Activated naive CD4-positive, alpha-beta T cell treated with anti-CD3 and anti-CD28 coated beads for 36 hours (primary cell): ENCODE measurements at regions of chr6 and their contacts with region 1.

Region 1: DNA sequence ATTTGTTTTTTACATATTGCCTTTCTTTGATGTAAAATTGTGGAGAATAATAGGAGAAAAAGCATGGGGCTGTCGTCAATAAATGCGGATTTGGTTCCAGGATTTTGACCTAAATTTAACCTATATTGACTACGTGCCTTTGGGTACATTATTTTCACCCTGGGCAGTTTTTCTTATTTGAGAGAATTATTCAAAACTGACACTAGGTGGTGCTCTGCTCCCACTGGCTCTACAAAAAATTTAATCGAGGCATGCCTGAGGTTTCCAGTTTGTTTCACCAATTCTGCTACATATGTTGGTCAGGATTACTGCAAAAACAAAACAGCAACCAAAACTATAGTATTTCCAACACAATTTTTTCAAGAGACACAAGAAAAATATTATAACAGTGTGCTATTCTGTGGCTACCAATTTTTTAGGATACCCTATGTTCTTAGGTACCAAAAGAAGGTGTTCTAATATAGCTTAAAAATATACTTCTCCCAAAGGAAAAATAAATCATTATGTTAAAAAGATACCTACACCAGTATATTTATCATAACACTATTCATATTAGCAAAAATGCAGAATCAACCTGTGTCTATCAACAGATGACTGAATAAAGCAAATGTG is 48.6 kb upstream of the FABP7 start:
- DNase-seq: peak; percentile 31
- H3K4me3 Mint-ChIP-seq: no peak overlapping the region
- H3K27ac Mint-ChIP-seq: no peak overlapping the region
- H3K4me1 Mint-ChIP-seq: no peaks in the 10 kb centered on the region
- H3K27me3 Mint-ChIP-seq: peaks cover 19% of the 10 kb centered on the region

Region 2: DNA sequence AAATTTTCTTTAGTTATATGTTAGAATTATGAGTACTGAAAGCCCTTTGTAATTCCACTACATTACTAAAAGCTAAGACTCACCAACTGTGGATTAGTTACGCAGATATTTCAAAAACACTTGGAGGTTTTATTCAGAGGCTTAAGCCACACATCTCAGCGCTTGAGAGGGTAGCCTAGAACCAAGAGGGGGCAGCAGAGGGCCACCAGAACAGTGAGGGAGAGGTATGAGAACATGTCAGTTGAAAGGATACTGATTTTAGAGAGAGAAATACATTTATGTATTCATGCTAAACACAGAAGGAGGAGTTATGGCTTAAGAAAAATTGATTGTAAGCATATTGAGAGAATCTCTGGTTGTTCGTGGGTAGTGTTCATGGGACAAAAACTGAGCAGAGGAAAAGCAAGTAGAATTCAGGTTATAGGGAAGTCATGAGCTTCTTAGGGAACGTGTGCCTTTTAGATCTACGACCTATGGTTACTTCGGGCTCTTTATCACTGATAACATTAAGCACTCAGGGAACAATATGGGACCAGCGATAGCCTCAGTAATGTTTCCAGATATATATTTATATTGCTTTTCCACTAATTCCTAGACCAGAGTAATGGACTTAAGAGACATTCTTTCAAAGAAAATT is 238.8 kb before region 1 on chr6:
- CTCF ChIA-PET with region 1: interaction called, 6 read pairs
- intact Hi-C with region 1: loop called (anchors 1 kb)
- DNase-seq: peak; percentile 87
- H3K4me3 Mint-ChIP-seq: no peak overlapping the region
- H3K27ac Mint-ChIP-seq: no peak overlapping the region
- H3K4me1 Mint-ChIP-seq: peaks cover 10% of the 10 kb centered on the region
- H3K27me3 Mint-ChIP-seq: no peaks in the 10 kb centered on the region

Region 3: DNA sequence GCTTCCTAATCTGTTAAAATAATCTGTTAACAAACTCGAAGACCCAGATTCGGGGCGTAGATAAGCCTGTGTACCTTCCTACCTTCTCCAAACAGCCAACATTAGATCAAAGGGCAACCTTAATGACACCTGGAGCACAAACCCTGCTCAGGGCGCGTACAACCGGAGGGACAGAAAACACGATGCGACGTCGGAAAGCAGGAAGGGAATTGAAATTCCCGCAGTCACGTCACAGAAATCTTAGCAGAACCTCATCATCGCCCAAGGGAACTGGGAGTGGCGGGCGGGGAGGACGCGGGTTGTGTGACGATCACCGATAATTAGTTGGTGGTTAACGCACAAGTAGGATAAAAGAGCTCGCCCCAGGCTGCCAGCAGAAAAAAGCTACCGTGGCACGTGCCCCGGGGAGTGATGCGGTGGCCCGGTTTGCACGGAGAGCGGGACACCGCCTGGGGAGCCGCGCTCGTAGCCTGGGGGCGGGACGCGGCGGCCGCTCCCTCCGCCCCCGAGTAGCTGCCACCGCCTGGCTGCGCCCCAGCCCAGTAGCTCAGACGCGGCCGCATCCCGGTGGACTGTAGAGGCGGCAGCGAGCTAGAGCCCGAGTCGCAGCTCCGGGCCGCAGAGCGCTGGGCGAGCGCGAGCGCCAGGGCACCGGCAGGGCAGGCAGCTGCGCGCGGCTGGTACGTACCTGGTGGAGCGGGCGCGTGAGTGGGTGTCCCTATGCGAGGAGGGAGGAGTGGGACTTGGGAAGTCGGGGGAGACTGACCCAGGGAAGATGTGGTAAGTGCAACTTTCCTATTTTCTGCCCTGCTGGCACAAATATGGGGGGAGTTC is 120.8 kb before region 1 on chr6 and contains the start of gene PKIB:
- CTCF ChIA-PET with region 1: no interaction called
- intact Hi-C with region 1: loop called (anchors 2 kb)
- DNase-seq: peak; percentile 67
- H3K4me3 Mint-ChIP-seq: peak within 1 kb of the TSS; percentile 77
- H3K27ac Mint-ChIP-seq: no peak within 1 kb of the TSS
- H3K4me1 Mint-ChIP-seq: peaks cover 14% of the 10 kb centered on the region
- H3K27me3 Mint-ChIP-seq: peaks cover 30% of the 10 kb centered on the region
- total RNA-seq, gene PKIB: 0.67 TPM in 1 of 2 experiments, not detected in the other

Region 4: DNA sequence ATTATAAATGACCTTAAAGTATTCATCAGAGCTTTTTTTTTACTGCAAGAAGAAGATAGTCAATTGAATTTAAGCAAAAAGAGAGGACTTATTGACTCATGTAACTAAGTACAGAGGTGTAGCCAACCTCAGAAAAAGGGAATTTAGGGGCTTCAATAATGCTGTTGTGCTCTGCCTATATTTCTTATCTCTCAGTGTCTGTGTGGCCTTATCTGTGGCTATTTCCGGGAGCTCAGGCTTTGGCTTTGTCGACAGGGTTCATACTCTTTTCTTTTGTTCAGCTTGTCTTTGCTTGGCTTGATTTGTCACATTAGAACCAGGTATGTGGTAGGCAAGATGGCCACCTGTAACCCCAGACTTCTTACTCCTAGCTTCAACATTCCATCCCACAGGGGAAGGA is 10.1 kb after region 1 on chr6:
- CTCF ChIA-PET with region 1: interaction called, 10 read pairs
- intact Hi-C with region 1: no loop called
- DNase-seq: no peak
- H3K4me3 Mint-ChIP-seq: no peak overlapping the region
- H3K27ac Mint-ChIP-seq: no peak overlapping the region
- H3K4me1 Mint-ChIP-seq: no peaks in the 10 kb centered on the region
- H3K27me3 Mint-ChIP-seq: no peaks in the 10 kb centered on the region

Region 5: DNA sequence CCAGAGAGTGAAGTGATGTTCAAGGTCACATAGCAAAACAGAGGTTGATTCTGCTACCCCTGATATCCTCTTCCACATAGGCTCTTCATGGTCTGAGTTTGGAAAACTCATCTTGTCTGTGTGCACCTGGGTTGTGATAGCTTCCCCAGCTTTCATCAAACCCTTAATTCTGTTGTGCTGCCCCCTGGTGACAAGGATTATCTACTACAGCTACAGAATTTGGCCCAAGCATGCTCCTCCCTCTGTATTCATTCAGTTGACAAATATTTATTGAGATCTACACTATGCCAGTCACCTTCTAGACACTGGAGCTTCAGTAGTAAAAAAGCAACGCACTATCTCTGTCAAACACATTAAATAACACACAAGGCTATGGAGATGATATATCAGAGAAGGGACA is 108.6 kb after region 1 on chr6:
- CTCF ChIA-PET with region 1: interaction called, 83 read pairs
- intact Hi-C with region 1: loop called (anchors 1 kb)
- DNase-seq: peak; percentile 72
- H3K4me3 Mint-ChIP-seq: no peak overlapping the region
- H3K27ac Mint-ChIP-seq: no peak overlapping the region
- H3K4me1 Mint-ChIP-seq: no peaks in the 10 kb centered on the region
- H3K27me3 Mint-ChIP-seq: peaks cover 10% of the 10 kb centered on the region

Region 6: DNA sequence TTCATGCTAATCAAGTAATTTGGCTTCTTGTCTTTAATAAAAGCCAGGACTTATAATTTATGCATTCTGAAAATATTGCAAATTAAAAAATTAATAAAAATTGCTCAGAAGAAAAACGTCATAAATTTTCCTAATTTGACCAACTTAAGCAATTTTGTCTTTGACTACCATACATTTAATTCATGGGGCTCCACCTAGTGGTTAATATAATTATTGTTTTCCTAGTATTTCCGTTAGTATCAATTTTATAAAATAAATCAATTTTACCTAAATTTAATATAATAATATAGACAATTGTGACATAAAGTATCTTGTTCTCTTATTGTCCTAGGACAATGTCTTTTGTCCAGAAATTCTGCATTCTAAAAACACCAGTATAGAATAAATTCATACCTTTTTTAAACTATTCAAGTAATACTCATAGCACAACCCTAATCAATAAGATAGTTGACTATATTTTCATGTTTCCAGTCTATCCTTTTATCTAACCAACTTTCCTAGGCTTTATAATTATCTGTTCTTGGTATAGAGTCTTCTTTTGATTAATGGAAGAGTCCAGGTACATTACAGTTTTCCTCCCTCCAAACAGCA is 585.9 kb after region 1 on chr6:
- CTCF ChIA-PET with region 1: interaction called, 3 read pairs
- intact Hi-C with region 1: loop called (anchors 1 kb)
- DNase-seq: no peak
- H3K4me3 Mint-ChIP-seq: no peak overlapping the region
- H3K27ac Mint-ChIP-seq: no peak overlapping the region
- H3K4me1 Mint-ChIP-seq: no peaks in the 10 kb centered on the region
- H3K27me3 Mint-ChIP-seq: peaks cover 2% of the 10 kb centered on the region

Region 7: GRCh38 chr6:123715006-123715875 is 984.4 kb after region 1 on chr6:
- CTCF ChIA-PET with region 1: no interaction called
- intact Hi-C with region 1: loop called (anchors 5 kb)
- DNase-seq: no peak
- H3K4me3 Mint-ChIP-seq: no peak overlapping the region
- H3K27ac Mint-ChIP-seq: no peak overlapping the region
- H3K4me1 Mint-ChIP-seq: no peaks in the 10 kb centered on the region
- H3K27me3 Mint-ChIP-seq: no peaks in the 10 kb centered on the region